Common myeloid progenitor, CD34-positive (primary cell): ENCODE measurements at regions of chr2 and their contacts with region 1.

Region 1: DNA sequence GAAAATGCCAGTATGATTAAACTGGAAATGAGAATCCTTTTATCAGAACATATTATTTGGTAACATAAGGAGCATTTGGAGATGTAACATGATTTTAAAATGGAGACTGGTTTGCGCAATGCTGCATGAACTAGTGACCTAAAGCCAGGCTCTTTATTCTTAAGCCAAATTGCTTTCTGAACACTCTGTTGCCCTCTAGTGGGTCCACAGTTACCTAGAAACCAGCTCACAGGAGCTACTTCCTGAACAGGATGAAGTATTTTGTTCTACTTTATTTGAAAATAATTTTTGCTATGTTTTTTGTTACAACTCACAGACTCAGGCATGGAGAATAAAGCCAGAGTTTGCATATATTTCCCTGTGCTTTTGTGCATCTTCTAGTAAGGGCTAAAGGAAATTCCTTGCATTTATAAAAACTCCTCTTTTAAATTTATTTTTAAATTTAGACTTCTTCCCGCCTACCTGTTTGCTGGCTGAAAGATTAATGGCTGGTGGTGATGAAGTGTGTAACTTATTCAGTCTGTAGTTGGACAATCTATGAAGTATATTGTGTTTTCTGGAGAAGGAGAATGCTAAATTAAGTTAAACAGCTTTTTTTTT is 146.7 kb downstream of the PARD3B start:
- DNase-seq: peak; percentile 64 to 80 (median 78)
- H3K4me3 ChIP-seq: no peak overlapping the region
- H3K27ac ChIP-seq: no peak overlapping the region
- H3K4me1 ChIP-seq: no peaks in the 10 kb centered on the region
- H3K27me3 ChIP-seq: no peaks in the 10 kb centered on the region

Region 2: DNA sequence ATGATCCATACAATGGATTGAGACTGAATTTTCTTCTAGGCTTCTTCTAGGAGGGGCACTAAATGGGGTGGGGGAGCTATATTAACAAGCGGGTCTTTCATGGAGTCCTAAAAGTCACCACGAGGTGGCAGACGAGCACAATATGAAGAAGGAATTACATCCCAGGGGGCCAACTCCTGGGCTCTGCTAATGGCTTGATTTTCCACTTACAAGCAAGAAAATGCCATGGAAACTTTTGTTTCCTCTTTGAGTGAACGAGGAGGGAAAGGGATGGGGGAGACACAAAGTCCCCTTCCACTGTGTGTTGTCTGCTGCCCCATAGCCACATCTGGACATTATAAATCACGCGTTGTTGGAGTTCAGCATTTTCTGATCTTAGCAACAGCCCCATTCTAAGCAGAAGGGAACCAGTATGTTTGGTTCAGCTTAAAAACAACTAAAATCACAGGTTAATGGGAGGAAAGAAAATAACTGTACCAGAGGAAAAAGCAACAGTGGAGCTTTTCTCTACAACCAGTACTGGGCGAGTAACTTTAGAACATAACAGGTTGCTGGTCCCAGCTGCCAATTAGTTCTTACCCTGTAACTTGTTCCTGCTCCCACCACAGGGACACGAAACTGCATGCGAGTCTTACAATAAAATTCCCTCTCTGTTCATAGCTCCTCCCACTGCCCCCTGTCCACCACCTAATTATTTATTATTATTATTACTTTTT is 431.7 kb before region 1 on chr2:
- CTCF ChIA-PET with region 1: interaction called, 14 read pairs
- POLR2A ChIA-PET with region 1: no interaction called
- DNase-seq: peak; percentile 71 to 80 (median 73)
- H3K4me3 ChIP-seq: no peak overlapping the region
- H3K27ac ChIP-seq: no peak overlapping the region
- H3K4me1 ChIP-seq: peaks cover 0 to 20% (median 13%) of the 10 kb centered on the region in 4 experiments
- H3K27me3 ChIP-seq: peaks cover 0 to 4% (median 0%) of the 10 kb centered on the region in 5 experiments

Region 3: GRCh38 chr2:204325468-204325867 is 366.5 kb before region 1 on chr2:
- CTCF ChIA-PET with region 1: interaction called, 13 read pairs
- POLR2A ChIA-PET with region 1: no interaction called
- DNase-seq: peak; percentile 77 to 90 (median 84)
- H3K4me3 ChIP-seq: no peak overlapping the region
- H3K27ac ChIP-seq: no peak overlapping the region
- H3K4me1 ChIP-seq: no peaks in the 10 kb centered on the region
- H3K27me3 ChIP-seq: peaks cover 0 to 1% (median 0%) of the 10 kb centered on the region in 5 experiments